A549 (cell line): ENCODE measurements at regions of chr14 and their contacts with region 1.

Region 1: DNA sequence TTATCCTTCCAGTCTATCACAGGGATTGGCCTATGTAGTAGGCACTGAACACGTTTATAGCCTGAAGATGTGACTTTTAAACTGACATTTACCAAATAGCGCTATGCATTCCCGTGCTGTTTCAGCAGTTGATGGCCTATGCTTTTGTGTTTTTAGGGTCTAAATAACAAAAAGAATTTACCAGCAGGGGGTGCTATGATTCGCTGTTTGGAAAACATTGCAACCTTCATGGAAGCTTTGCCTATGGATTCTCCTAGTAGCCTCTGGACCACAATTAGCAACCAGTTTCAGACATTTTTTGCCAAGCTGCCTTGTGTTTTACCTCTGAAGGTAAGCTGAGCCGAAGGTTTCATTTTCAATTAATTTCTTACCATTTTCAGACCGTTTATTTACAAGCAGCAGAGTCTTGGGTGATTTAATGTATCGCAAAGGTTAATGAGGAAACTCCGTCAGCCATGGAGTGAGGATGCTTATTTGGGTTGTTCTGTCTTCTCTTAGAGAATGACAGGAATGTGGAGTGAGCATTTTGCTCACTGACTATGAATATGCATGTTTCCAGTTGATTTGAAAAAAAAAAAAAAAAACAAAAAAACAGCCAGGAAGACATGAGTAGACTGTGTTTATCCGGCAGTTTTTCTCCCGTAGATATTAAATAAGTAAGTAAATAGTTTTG is 133.1 kb downstream of the PRIMA1 start:
- DNase-seq: peak; percentile 22 to 58
- ATAC-seq: peak; percentile 50 to 71; a peak in 4 of 6 replicates
- H3K4me3 ChIP-seq: no peak overlapping the region
- H3K27ac ChIP-seq: no peak overlapping the region
- H3K4me1 ChIP-seq: no peaks in the 10 kb centered on the region
- CTCF ChIP-seq: peak; percentile 59
- EP300 ChIP-seq: no peak
- POLR2A ChIP-seq: no peak
- RAD21 ChIP-seq: peak; percentile 59 to 67

Region 2: GRCh38 chr14:93892923-93893558 is 237.8 kb after region 1 on chr14:
- CTCF ChIA-PET with region 1: interaction called, 19 read pairs
- POLR2A ChIA-PET with region 1: no interaction called
- DNase-seq: peak; percentile 52 to 54
- ATAC-seq: peak; percentile 65 to 89; a peak in 3 of 6 replicates
- H3K4me3 ChIP-seq: no peak overlapping the region
- H3K27ac ChIP-seq: no peak overlapping the region
- H3K4me1 ChIP-seq: no peaks in the 10 kb centered on the region
- CTCF ChIP-seq: peak; percentile 61
- EP300 ChIP-seq: no peak
- POLR2A ChIP-seq: no peak
- RAD21 ChIP-seq: peak; percentile 59 to 64

Region 3: GRCh38 chr14:93898081-93898611 is 242.9 kb after region 1 on chr14:
- CTCF ChIA-PET with region 1: interaction called, 16 read pairs
- POLR2A ChIA-PET with region 1: no interaction called
- DNase-seq: no peak
- ATAC-seq: no peak
- H3K4me3 ChIP-seq: no peak overlapping the region
- H3K27ac ChIP-seq: no peak overlapping the region
- H3K4me1 ChIP-seq: no peaks in the 10 kb centered on the region
- CTCF ChIP-seq: no peak
- EP300 ChIP-seq: no peak
- POLR2A ChIP-seq: no peak
- RAD21 ChIP-seq: no peak

Region 4: DNA sequence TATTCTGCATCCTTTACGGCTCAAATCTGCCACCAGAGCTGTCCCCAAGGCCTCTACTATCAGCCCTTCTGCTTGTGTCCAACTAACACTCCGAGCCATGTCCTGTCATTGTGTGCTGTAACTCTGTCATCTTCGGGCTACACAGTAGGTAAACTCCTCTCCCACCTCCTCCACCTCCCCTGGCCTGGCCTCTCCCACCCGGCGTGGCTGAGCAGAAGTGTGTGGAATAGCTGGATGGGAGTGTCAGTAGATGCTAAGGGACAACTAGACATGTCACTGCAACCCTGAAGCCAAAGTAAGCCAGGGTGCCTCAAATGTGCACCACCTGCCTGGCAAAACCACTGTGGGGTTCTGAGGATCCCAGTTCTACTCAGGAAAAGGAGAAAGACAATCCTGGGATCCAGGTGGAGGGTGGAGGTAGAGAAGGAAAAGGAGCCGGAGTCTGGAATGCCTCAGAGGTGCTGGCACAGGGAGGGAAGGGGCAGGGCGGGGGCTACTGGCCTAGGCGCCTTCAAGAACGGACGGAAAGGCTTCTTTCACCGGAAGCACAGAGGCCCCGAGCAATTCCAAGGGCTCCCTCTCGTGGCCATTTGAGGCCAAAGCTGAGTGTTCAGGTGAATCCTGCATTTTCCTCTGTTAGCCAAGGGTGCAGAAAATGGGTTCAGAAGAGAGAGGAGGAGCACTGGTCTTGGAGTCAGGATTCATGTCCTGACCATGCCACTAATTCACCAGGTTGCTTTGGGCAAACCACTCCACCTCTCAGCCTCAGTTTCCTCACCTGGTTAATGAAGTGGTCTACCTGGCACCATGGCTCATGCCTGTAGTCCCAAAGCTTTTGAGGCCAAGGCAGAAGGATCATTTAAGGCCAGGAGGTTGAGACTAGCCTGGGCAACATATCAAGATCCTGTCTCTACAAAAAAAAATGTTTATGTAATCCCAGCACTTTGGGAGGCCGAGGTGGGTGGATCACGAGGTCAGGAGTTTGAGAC is 251.4 kb after region 1 on chr14:
- CTCF ChIA-PET with region 1: interaction called, 12 read pairs
- POLR2A ChIA-PET with region 1: no interaction called
- DNase-seq: peak; percentile 36 to 56
- ATAC-seq: peak in 1 of 2 experiments; percentile 83; a peak in 3 of 6 replicates
- H3K4me3 ChIP-seq: no peak overlapping the region
- H3K27ac ChIP-seq: no peak overlapping the region
- H3K4me1 ChIP-seq: no peaks in the 10 kb centered on the region
- CTCF ChIP-seq: peak; percentile 28; the same call in 2 of the 3 replicates
- EP300 ChIP-seq: no peak
- POLR2A ChIP-seq: no peak
- RAD21 ChIP-seq: peak in 1 of 2 experiments; percentile 64; a peak in 3 of 5 replicates

Region 5: DNA sequence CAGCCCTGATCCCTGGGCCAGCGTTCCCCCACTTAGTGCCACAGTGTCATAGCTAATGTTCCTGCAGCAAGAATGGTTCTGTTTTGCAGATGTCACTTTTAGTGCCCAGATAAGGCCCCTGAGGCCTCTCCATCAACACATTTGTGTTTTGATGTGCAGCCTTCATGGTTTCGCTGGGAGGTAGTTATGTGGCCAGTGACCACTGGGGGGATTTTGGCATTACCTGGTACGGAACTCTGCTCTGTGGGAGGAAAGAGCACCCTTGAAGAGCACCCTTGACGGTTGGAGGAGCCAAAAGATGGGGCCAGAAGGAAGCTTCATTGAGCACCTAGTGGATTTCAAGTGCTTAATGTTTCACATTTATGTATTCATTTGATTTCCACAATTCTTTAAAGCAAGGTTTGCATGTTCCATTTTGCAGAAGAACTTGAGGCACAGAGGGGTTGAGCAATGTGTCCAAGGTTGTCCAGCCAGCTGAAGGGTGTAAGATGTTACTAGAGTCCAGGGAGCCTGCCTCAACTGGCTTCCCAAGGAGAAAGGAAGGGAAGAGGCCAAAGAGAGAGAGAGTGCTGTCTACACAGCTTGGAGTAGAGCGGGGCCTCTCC is 784.3 kb after region 1 on chr14:
- CTCF ChIA-PET with region 1: no interaction called
- POLR2A ChIA-PET with region 1: no interaction called
- DNase-seq: no peak
- ATAC-seq: peak in 1 of 2 experiments; percentile 55; a peak in 2 of 6 replicates
- H3K4me3 ChIP-seq: no peak overlapping the region
- H3K27ac ChIP-seq: no peak overlapping the region
- H3K4me1 ChIP-seq: no peaks in the 10 kb centered on the region
- CTCF ChIP-seq: no peak
- EP300 ChIP-seq: no peak
- POLR2A ChIP-seq: no peak
- RAD21 ChIP-seq: no peak